ENCODE measurements at regions of chr7 and their contacts with region 1.

Region 1: GRCh38 chr7:32204361-32205018 is 134.3 kb upstream of the PDE1C start:
- DNase-seq: peak; percentile 79 to 91
- ATAC-seq: peak; percentile 99
- H3K4me3 ChIP-seq: peak overlapping the region; percentile 19; the same call in 2 of the 3 replicates
- H3K27ac ChIP-seq: peak overlapping the region; percentile 40 to 76; a peak in 5 of 6 replicates
- H3K4me1 ChIP-seq: peaks cover 4% of the 10 kb centered on the region; the same call in 2 of the 3 replicates
- CTCF ChIP-seq: peak; percentile 95
- EP300 ChIP-seq: no peak
- POLR2A ChIP-seq: no peak
- RAD21 ChIP-seq: peak; percentile 99 to 100

Region 2: GRCh38 chr7:31493714-31494181 is 710.7 kb before region 1 on chr7:
- CTCF ChIA-PET with region 1: no interaction called
- POLR2A ChIA-PET with region 1: no interaction called
- DNase-seq: no peak
- ATAC-seq: no peak
- H3K4me3 ChIP-seq: no peak overlapping the region
- H3K27ac ChIP-seq: no peak overlapping the region
- H3K4me1 ChIP-seq: no peaks in the 10 kb centered on the region
- CTCF ChIP-seq: no peak
- EP300 ChIP-seq: no peak
- POLR2A ChIP-seq: no peak
- RAD21 ChIP-seq: no peak

Region 3: DNA sequence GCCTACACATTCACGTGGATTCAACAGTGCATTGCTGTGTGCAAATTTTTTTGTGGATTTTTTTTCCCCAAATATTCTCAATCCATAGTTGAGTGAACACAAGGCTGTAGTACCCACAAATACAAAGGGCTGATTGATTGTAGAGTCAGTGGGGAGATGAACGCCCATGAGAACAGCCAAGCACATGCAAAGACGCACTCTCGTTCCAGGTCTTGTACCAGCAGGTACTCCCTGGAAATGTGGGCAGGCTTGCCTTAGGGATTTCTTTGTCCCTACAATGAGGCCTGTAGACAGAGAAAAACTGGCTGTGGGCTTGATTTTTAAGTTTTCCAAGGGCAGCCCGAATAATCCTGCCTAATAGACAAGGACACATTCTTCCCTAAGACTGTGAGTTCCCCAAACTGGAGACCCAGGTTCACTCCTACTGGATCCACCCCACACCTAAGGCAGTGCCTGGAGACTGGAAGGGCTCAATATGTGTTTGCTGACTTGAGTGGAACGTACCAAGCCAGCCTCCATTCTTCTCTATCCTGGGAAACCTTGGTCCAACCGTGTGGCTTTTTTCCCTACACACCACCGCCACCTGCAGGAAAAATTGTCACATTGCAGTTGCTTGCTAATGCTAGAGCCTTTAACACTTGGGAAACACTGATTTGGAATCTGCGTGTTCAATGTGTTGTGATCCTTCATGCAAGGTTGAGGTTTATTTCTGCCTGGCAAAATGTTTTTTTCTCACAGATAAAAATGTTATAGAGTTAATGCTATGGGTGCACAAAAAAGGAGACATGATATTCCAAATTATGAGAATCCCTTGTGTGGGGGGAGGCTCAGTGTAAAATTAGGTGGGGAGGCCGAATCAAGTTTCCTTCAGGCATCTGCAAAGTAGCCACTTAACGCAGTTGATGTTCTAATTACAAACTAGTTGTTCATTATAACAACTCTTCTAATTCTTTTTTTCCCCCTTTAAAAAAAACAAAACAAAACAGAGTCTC is 468.2 kb before region 1 on chr7:
- CTCF ChIA-PET with region 1: interaction called, 70 read pairs
- POLR2A ChIA-PET with region 1: no interaction called
- DNase-seq: peak; percentile 45 to 64
- ATAC-seq: peak; percentile 80 to 95
- H3K4me3 ChIP-seq: no peak overlapping the region
- H3K27ac ChIP-seq: no peak overlapping the region
- H3K4me1 ChIP-seq: no peaks in the 10 kb centered on the region
- CTCF ChIP-seq: peak; percentile 78
- EP300 ChIP-seq: no peak
- POLR2A ChIP-seq: no peak
- RAD21 ChIP-seq: peak; percentile 81 to 93

Region 4: DNA sequence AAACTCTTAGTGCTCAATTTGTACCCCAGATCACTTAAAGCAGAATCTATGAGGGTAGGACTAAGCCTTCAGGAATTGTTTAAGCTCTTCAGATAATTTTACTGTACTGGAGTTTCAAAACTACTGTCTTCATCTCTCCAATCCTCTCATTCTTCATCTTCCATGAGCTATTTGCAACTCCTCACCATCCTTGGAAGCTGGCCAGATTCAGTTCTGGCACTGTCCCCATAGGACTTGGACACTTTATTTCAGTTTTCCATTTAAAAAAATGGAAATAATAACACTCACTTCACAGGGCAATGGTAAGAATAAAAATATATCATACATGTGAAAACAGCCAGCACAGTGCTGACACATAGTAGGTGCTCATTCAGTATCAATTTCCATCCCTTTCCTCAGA is 442.8 kb before region 1 on chr7:
- CTCF ChIA-PET with region 1: interaction called, 26 read pairs
- POLR2A ChIA-PET with region 1: no interaction called
- DNase-seq: no peak
- ATAC-seq: no peak
- H3K4me3 ChIP-seq: no peak overlapping the region
- H3K27ac ChIP-seq: no peak overlapping the region
- H3K4me1 ChIP-seq: no peaks in the 10 kb centered on the region
- CTCF ChIP-seq: no peak
- EP300 ChIP-seq: no peak
- POLR2A ChIP-seq: no peak
- RAD21 ChIP-seq: no peak

Region 5: DNA sequence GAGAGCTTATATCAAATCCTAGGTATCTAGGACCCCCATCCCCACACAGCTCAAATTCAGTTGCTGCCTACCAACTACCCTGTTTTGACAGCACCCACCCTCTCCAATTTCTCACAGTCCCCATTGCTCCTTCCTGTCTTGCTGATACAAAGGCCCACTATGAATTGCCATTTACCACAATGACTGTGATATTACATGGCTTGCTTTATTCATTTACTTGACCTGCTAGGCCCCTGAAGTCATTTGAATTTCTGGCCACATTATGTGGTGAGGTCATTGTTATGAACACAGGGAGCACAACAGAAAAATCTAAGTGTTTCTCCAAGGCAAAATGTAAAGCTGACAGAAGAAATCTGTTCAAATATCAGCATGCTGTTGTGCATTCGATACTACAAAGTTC is 416.0 kb before region 1 on chr7:
- CTCF ChIA-PET with region 1: interaction called, 44 read pairs
- POLR2A ChIA-PET with region 1: no interaction called
- DNase-seq: no peak
- ATAC-seq: no peak
- H3K4me3 ChIP-seq: no peak overlapping the region
- H3K27ac ChIP-seq: no peak overlapping the region
- H3K4me1 ChIP-seq: no peaks in the 10 kb centered on the region
- CTCF ChIP-seq: no peak
- EP300 ChIP-seq: no peak
- POLR2A ChIP-seq: no peak
- RAD21 ChIP-seq: no peak

Region 6: GRCh38 chr7:32126843-32127242 is 77.6 kb before region 1 on chr7:
- CTCF ChIA-PET with region 1: no interaction called
- POLR2A ChIA-PET with region 1: no interaction called
- DNase-seq: no peak
- ATAC-seq: no peak
- H3K4me3 ChIP-seq: no peak overlapping the region
- H3K27ac ChIP-seq: no peak overlapping the region
- H3K4me1 ChIP-seq: no peaks in the 10 kb centered on the region
- CTCF ChIP-seq: no peak
- EP300 ChIP-seq: no peak
- POLR2A ChIP-seq: no peak
- RAD21 ChIP-seq: no peak

Region 7: DNA sequence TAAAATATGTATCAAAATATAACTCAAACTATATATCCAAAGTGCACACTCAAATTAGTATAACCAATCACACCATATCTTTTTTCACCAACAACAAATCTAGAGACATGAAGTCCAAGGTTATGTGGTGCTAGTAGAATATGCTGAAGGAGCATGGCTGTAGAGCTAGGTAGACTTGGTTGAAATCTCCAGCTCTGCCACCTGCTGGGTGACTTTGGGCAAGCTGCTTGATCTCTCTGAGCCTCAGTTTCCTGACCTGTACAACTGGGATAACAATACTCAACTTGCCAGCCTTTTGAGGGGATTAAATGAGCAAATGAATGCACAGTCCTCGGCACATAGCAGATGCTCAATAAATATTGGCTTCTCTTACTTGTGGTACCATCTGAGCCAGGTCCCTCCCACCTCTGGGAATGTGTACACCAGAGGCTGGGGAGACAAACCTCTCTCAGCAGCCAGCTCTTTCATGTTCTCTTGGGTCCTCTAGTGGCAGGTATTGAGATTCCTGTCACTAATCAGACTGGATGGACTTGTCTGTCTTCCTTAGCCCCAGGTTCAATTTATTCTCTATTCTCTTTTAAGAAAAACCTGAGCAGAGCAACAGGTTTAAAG is 40.0 kb before region 1 on chr7:
- CTCF ChIA-PET with region 1: interaction called, 30 read pairs
- POLR2A ChIA-PET with region 1: no interaction called
- DNase-seq: peak; percentile 53 to 75
- ATAC-seq: peak; percentile 73 to 84; a peak in 5 of 6 replicates
- H3K4me3 ChIP-seq: no peak overlapping the region
- H3K27ac ChIP-seq: peak overlapping the region; percentile 74 to 85; a peak in 4 of 6 replicates
- H3K4me1 ChIP-seq: peaks cover 30% of the 10 kb centered on the region
- CTCF ChIP-seq: peak; percentile 71
- EP300 ChIP-seq: no peak
- POLR2A ChIP-seq: no peak
- RAD21 ChIP-seq: peak; percentile 74 to 78

Region 8: GRCh38 chr7:32347244-32347828 is 142.8 kb after region 1 on chr7:
- CTCF ChIA-PET with region 1: interaction called, 22 read pairs
- POLR2A ChIA-PET with region 1: no interaction called
- DNase-seq: peak; percentile 15 to 19
- ATAC-seq: 0 out of 6 replicates have a peak, but pooled peaks of 1 of the 2 experiments have one; percentile 40
- H3K4me3 ChIP-seq: no peak overlapping the region
- H3K27ac ChIP-seq: no peak overlapping the region
- H3K4me1 ChIP-seq: no peaks in the 10 kb centered on the region
- CTCF ChIP-seq: peak; percentile 68
- EP300 ChIP-seq: no peak
- POLR2A ChIP-seq: no peak
- RAD21 ChIP-seq: peak; percentile 34 to 50; a peak in 3 of 5 replicates

Region 9: GRCh38 chr7:32479574-32480200 is 275.2 kb after region 1 on chr7:
- CTCF ChIA-PET with region 1: interaction called, 241 read pairs
- POLR2A ChIA-PET with region 1: no interaction called
- DNase-seq: peak; percentile 62 to 72
- ATAC-seq: peak; percentile 61 to 67
- H3K4me3 ChIP-seq: no peak overlapping the region
- H3K27ac ChIP-seq: no peak overlapping the region
- H3K4me1 ChIP-seq: no peaks in the 10 kb centered on the region
- CTCF ChIP-seq: peak; percentile 92
- EP300 ChIP-seq: no peak
- POLR2A ChIP-seq: no peak
- RAD21 ChIP-seq: peak; percentile 90 to 95

Measured in A549 (cell line).